Activated CD8-positive, alpha-beta T cell treated with anti-CD3 and anti-CD28 coated beads, Interleukin-2, amount 10 ng/mL, durations not matched to agents 7 days and 5 days (primary cell): ENCODE measurements at regions of chr12 and their contacts with region 1.

Region 1: GRCh38 chr12:52023182-52023975 is 16.6 kb downstream of the TAMALIN start:
- DNase-seq: peak; percentile 95
- ATAC-seq: peak; percentile 61
- H3K4me3 Mint-ChIP-seq: peak overlapping the region; percentile 94
- H3K27ac Mint-ChIP-seq: peak overlapping the region; percentile 99
- H3K4me1 Mint-ChIP-seq: peaks cover 59% of the 10 kb centered on the region
- H3K27me3 Mint-ChIP-seq: peaks cover 2% of the 10 kb centered on the region

Region 2: GRCh38 chr12:51923501-51924271 is 99.7 kb before region 1 on chr12:
- CTCF ChIA-PET with region 1: interaction called, 30 read pairs
- POLR2A ChIA-PET with region 1: no interaction called
- DNase-seq: peak; percentile 61
- ATAC-seq: peak; percentile 82
- H3K4me3 Mint-ChIP-seq: no peak overlapping the region
- H3K27ac Mint-ChIP-seq: no peak overlapping the region
- H3K4me1 Mint-ChIP-seq: peaks cover 4% of the 10 kb centered on the region
- H3K27me3 Mint-ChIP-seq: peaks cover 10% of the 10 kb centered on the region

Region 3: DNA sequence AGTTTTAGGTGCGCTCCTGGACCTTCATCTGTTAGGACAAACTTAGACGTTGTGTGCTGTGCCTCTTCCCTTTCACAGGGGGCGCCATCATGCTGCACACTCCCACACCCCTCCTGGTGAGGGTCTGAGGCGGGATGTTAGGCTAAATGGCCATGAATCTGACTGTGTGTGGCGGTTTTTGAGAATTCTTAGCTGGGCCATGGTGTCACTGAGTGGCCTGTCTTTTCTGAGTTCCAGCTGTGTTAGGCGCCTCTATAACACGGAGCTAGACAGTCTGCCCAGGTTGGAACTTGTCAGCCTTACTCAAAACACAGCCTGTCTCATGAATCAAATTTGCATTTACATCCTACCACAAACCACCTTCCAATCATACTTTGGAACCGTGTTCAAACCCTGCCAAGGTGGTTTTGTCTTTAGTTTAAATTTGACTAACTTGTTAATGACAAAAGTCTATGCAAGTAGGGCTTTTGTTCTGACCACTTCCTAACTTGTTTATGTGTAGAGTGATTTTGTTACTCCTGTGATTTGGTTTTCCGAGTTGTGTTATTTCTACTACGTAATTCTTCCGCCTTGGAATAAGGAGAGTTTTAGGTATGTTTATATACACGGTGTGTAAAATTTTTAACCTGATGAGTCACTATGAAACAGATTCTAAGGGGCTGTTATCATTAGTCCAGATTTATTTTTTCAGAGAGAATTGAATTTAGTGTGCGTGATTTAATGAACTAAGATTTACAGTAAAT is 52.3 kb before region 1 on chr12:
- CTCF ChIA-PET with region 1: interaction called, 30 read pairs
- POLR2A ChIA-PET with region 1: no interaction called
- DNase-seq: peak; percentile 71
- ATAC-seq: peak; percentile 83
- H3K4me3 Mint-ChIP-seq: peak overlapping the region; percentile 62
- H3K27ac Mint-ChIP-seq: peak overlapping the region; percentile 80
- H3K4me1 Mint-ChIP-seq: peaks cover 62% of the 10 kb centered on the region
- H3K27me3 Mint-ChIP-seq: peaks cover 8% of the 10 kb centered on the region

Region 4: GRCh38 chr12:52004042-52004648 is 19.2 kb before region 1 on chr12:
- CTCF ChIA-PET with region 1: interaction called, 472 read pairs
- POLR2A ChIA-PET with region 1: interaction called, 5 read pairs
- DNase-seq: no peak
- ATAC-seq: no peak
- H3K4me3 Mint-ChIP-seq: no peak overlapping the region
- H3K27ac Mint-ChIP-seq: no peak overlapping the region
- H3K4me1 Mint-ChIP-seq: peaks cover 30% of the 10 kb centered on the region
- H3K27me3 Mint-ChIP-seq: peaks cover 14% of the 10 kb centered on the region

Region 5: GRCh38 chr12:52069327-52070184 is 46.2 kb after region 1 on chr12 and contains the start of gene ATG101:
- CTCF ChIA-PET with region 1: interaction called, 424 read pairs
- POLR2A ChIA-PET with region 1: interaction called, 10 read pairs
- DNase-seq: peak; percentile 92
- ATAC-seq: peak; percentile 97
- H3K4me3 Mint-ChIP-seq: peak within 1 kb of the TSS; percentile 93
- H3K27ac Mint-ChIP-seq: peak within 1 kb of the TSS; percentile 99
- H3K4me1 Mint-ChIP-seq: peaks cover 54% of the 10 kb centered on the region
- H3K27me3 Mint-ChIP-seq: peaks cover 6% of the 10 kb centered on the region
- total RNA-seq, gene ATG101: 28.8 to 31.1 TPM

Region 6: GRCh38 chr12:52121824-52122539 is 98.6 kb after region 1 on chr12:
- CTCF ChIA-PET with region 1: interaction called, 94 read pairs
- POLR2A ChIA-PET with region 1: no interaction called
- DNase-seq: peak; percentile 79
- ATAC-seq: no peak
- H3K4me3 Mint-ChIP-seq: no peak overlapping the region
- H3K27ac Mint-ChIP-seq: no peak overlapping the region
- H3K4me1 Mint-ChIP-seq: peaks cover 26% of the 10 kb centered on the region
- H3K27me3 Mint-ChIP-seq: peaks cover 12% of the 10 kb centered on the region

Region 7: GRCh38 chr12:52230327-52231291 is 207.2 kb after region 1 on chr12:
- CTCF ChIA-PET with region 1: no interaction called
- POLR2A ChIA-PET with region 1: no interaction called
- DNase-seq: no peak
- ATAC-seq: no peak
- H3K4me3 Mint-ChIP-seq: no peak overlapping the region
- H3K27ac Mint-ChIP-seq: no peak overlapping the region
- H3K4me1 Mint-ChIP-seq: no peaks in the 10 kb centered on the region
- H3K27me3 Mint-ChIP-seq: peaks cover 73% of the 10 kb centered on the region

Region 8: GRCh38 chr12:52372216-52373154 is 349.1 kb after region 1 on chr12:
- CTCF ChIA-PET with region 1: no interaction called
- POLR2A ChIA-PET with region 1: no interaction called
- DNase-seq: peak; percentile 76
- ATAC-seq: peak; percentile 72
- H3K4me3 Mint-ChIP-seq: no peak overlapping the region
- H3K27ac Mint-ChIP-seq: no peak overlapping the region
- H3K4me1 Mint-ChIP-seq: no peaks in the 10 kb centered on the region
- H3K27me3 Mint-ChIP-seq: peaks cover 35% of the 10 kb centered on the region